ENCODE measurements at regions of chr11 and their contacts with region 1.

Region 1: GRCh38 chr11:47269002-47269828 is 718 bp upstream of the MADD start:
- DNase-seq: peak; percentile 90
- ATAC-seq: peak; percentile 64
- H3K4me3 Mint-ChIP-seq: peak overlapping the region; percentile 78
- H3K27ac Mint-ChIP-seq: peak overlapping the region; percentile 98
- H3K4me1 Mint-ChIP-seq: peaks cover 62% of the 10 kb centered on the region
- H3K27me3 Mint-ChIP-seq: no peaks in the 10 kb centered on the region

Region 2: GRCh38 chr11:47111318-47111804 is 157.9 kb before region 1 on chr11:
- CTCF ChIA-PET with region 1: no interaction called
- DNase-seq: no peak
- ATAC-seq: no peak
- H3K4me3 Mint-ChIP-seq: no peak overlapping the region
- H3K27ac Mint-ChIP-seq: no peak overlapping the region
- H3K4me1 Mint-ChIP-seq: no peaks in the 10 kb centered on the region
- H3K27me3 Mint-ChIP-seq: peaks cover 7% of the 10 kb centered on the region

Region 3: DNA sequence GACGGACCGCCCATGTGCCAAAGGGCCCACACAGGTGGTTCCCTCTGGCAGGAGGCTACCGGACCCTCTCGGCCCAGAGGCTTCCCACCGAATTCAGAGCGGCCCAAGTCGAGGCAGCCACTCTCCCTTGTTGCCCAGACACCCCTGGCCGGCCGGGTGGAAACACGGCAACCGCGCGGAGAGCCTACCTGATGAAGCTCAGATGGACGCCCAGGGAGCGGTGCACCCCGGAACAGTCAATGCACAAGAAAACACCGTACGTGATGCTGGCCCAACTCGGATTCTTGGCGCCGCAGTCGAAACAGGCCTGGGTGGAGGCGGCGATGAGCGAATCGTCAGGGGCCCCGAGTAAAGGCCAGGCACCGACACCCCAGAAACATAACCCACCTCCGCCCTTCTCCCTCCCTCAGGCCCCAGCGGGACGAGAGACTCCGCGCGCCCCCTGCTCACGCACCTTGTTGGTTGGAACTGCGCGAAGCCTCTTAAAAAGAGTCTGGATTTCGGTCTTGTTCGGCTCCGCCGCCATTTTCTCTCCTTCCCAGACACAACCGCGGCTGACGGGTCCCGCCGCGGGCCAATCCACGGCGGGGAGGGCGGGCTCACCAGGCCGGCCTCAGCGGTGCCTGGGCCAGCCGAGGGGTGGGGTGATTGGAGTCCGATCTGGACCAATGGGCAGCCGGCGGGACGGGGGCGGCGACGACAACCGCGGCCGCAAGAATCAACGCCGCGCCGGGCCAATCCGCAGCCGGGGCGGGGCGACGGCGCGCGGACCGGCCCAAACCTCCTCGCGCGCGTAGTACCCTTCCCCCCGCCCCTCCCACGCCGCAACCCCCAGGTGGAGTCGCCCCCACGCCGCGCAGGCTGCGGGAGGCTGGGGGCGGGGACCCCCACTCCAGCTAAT is 92.6 kb before region 1 on chr11 and contains the start of gene ARFGAP2:
- CTCF ChIA-PET with region 1: interaction called, 10 read pairs
- DNase-seq: peak; percentile 97
- ATAC-seq: peak; percentile 95
- H3K4me3 Mint-ChIP-seq: peak within 1 kb of the TSS; percentile 94
- H3K27ac Mint-ChIP-seq: peak within 1 kb of the TSS; percentile 100
- H3K4me1 Mint-ChIP-seq: peaks cover 52% of the 10 kb centered on the region
- H3K27me3 Mint-ChIP-seq: no peaks in the 10 kb centered on the region
- total RNA-seq, gene ARFGAP2: 103 TPM

Region 4: DNA sequence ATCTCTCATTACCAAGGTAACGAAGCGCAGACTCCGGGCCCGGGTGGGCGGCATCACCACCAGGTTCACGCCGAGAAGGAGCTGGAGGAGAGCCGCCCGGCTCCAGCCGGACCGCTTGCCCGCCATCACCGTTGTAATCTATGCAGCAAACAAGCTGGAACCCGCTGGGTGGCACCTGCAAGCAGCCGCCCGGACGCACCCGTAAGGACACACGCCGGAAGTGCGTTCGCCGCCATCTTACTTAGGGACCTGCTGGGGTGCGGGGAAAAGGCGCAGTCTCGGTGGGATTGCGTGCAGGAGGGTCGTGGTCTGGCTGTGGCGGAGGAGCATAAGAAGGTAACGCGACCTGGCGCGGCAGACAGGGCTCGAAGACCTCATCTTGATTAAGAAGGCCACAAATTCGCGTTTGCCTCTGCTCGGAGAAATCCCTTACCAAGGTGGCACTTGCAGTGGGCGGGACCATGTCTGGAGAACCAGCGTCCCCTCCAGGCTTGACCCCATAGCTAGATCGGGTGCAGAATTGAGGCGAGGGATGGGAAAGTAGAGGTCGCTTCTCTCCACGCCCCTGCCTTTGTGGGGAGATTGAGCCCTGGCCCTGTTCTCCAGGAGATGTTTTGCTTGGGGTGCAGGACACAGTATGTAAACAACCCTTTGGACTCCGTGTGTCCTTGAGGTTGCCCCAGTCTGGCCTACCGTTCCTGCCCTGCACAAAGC is 20.4 kb before region 1 on chr11 and contains the start of gene ACP2:
- CTCF ChIA-PET with region 1: interaction called, 11 read pairs
- DNase-seq: peak; percentile 93
- ATAC-seq: peak; percentile 98
- H3K4me3 Mint-ChIP-seq: peak within 1 kb of the TSS; percentile 89
- H3K27ac Mint-ChIP-seq: peak within 1 kb of the TSS; percentile 94
- H3K4me1 Mint-ChIP-seq: peaks cover 29% of the 10 kb centered on the region
- H3K27me3 Mint-ChIP-seq: no peaks in the 10 kb centered on the region
- total RNA-seq, gene ACP2: 26.0 to 29.7 TPM

Measured in activated CD8-positive, alpha-beta memory T cell treated with anti-CD3 and anti-CD28 coated beads, Interleukin-2, amount 10 ng/mL, durations not matched to agents 7 days and 5 days (primary cell).